Activated CD8-positive, alpha-beta T cell treated with anti-CD3 and anti-CD28 coated beads, Interleukin-2, amount 10 ng/mL, durations not matched to agents 7 days and 5 days (primary cell): ENCODE measurements at regions of chr1 and their contacts with region 1.

Region 1: DNA sequence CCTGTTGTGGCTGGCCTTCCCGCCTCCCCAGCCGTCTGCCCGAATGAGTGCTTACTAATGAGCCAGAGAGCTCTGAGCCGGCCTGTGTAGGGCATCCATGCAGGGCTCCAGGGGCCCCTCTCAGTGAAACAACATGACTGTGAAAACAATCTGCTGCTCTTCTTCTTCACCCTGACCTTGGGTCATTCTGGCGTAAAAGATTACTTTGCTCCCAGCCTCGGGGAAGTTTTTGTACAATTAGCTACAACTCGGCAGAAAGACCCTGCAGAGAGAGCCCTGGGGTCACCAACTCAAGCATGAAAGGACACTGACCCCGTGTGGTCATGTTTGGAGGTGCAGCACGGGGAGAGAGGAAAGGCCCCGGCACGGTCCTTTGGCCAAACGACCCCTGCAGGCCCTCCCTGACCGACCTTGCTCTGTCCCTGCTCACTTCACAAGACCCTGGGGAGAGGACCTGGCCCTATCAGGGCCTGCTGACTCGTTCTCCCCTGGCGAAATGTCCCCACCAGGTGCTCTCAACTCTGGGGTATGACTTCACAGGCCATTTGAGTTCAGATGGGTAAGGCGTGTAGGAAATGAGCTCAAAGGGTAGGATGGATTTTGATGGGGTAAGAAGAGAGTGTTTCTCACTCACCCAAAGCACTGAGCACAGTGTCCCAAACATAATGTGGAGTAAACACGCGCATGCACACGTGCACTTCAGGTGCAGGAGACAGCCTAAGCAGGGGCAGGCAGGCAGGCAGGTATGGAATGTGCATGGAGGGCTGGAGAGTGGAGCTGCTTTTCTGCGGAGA is 22.9 kb upstream of the FAM20B start:
- DNase-seq: peak; percentile 79
- ATAC-seq: peak; percentile 87
- H3K4me3 Mint-ChIP-seq: no peak overlapping the region
- H3K27ac Mint-ChIP-seq: peak overlapping the region; percentile 62
- H3K4me1 Mint-ChIP-seq: peaks cover 17% of the 10 kb centered on the region
- H3K27me3 Mint-ChIP-seq: peaks cover 3% of the 10 kb centered on the region

Region 2: DNA sequence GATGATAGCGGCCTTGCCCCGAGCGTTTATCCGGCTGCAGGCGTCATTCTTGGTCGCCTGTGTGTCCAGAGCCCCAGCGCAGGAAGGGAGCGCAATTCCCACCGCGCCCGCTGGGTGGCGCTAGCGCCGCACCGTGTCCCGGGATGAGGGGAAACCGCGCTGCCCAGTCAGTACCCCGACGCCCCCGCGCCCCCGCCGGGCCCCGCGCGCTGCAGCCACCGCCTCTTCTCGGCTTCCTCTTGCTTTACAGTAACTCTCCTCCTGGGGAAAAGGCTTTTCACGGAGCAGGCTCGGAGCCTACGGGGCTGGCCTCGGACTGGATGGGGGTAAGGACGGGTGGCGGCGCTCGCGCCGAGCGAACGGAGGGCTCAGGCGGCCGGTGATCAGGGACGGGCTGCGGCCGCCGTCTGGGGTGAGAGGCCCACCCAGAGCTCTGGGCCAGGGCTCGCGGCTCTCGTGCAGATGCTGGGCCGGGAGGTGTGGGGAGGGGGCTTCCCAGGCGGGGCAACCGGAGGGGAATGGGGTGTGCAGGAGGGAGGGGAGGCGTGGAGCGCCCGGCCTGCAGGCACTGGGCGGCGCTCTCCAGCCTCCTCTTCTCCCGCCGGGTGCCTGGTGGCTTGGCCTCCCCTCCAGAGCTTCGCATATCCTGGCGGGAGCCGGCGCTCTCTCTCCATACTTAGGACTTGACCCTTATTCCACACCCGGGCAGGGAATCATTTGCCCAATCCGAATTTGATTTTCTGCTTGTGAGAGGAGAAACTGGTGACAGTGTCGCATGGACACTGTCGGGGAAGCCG is 460.0 kb before region 1 on chr1:
- CTCF ChIA-PET with region 1: interaction called, 40 read pairs
- POLR2A ChIA-PET with region 1: no interaction called
- DNase-seq: peak; percentile 87
- ATAC-seq: peak; percentile 94
- H3K4me3 Mint-ChIP-seq: peak overlapping the region; percentile 86
- H3K27ac Mint-ChIP-seq: peak overlapping the region; percentile 91
- H3K4me1 Mint-ChIP-seq: peaks cover 4% of the 10 kb centered on the region
- H3K27me3 Mint-ChIP-seq: no peaks in the 10 kb centered on the region

Region 3: GRCh38 chr1:178768423-178768822 is 234.3 kb before region 1 on chr1:
- CTCF ChIA-PET with region 1: interaction called, 111 read pairs
- POLR2A ChIA-PET with region 1: no interaction called
- DNase-seq: peak; percentile 29
- ATAC-seq: peak; percentile 55
- H3K4me3 Mint-ChIP-seq: no peak overlapping the region
- H3K27ac Mint-ChIP-seq: no peak overlapping the region
- H3K4me1 Mint-ChIP-seq: no peaks in the 10 kb centered on the region
- H3K27me3 Mint-ChIP-seq: no peaks in the 10 kb centered on the region

Region 4: GRCh38 chr1:178784131-178784536 is 218.6 kb before region 1 on chr1:
- CTCF ChIA-PET with region 1: interaction called, 61 read pairs
- POLR2A ChIA-PET with region 1: no interaction called
- DNase-seq: no peak
- ATAC-seq: peak; percentile 75
- H3K4me3 Mint-ChIP-seq: peak overlapping the region; percentile 34
- H3K27ac Mint-ChIP-seq: peak overlapping the region; percentile 68
- H3K4me1 Mint-ChIP-seq: peaks cover 26% of the 10 kb centered on the region
- H3K27me3 Mint-ChIP-seq: no peaks in the 10 kb centered on the region

Region 5: GRCh38 chr1:179023946-179024650 is 21.3 kb after region 1 on chr1:
- CTCF ChIA-PET with region 1: interaction called, 11 read pairs
- POLR2A ChIA-PET with region 1: no interaction called
- DNase-seq: no peak
- ATAC-seq: no peak
- H3K4me3 Mint-ChIP-seq: peak overlapping the region; percentile 2
- H3K27ac Mint-ChIP-seq: no peak overlapping the region
- H3K4me1 Mint-ChIP-seq: peaks cover 24% of the 10 kb centered on the region
- H3K27me3 Mint-ChIP-seq: peaks cover 12% of the 10 kb centered on the region